ENCODE measurements at regions of chr10 and their contacts with region 1.

Region 1: GRCh38 chr10:96532496-96532895 is 18.8 kb upstream of the TLL2 start:
- DNase-seq: no peak
- ATAC-seq: no peak
- H3K4me3 ChIP-seq: no peak overlapping the region
- H3K27ac ChIP-seq: no peak overlapping the region
- H3K4me1 ChIP-seq: peaks cover 24% of the 10 kb centered on the region
- H3K27me3 ChIP-seq: no peaks in the 10 kb centered on the region
- CTCF ChIP-seq: no peak
- EP300 ChIP-seq: no peak
- POLR2A ChIP-seq: no peak
- RAD21 ChIP-seq: no peak

Region 2: GRCh38 chr10:96501985-96502384 is 30.5 kb before region 1 on chr10:
- CTCF ChIA-PET with region 1: no interaction called
- POLR2A ChIA-PET with region 1: no interaction called
- in situ Hi-C with region 1: no loop called
- intact Hi-C with region 1: loop called (anchors 1 kb)
- DNase-seq: peak; percentile 36
- ATAC-seq: peak; percentile 64
- H3K4me3 ChIP-seq: no peak overlapping the region
- H3K27ac ChIP-seq: no peak overlapping the region
- H3K4me1 ChIP-seq: peaks cover 37% of the 10 kb centered on the region
- H3K27me3 ChIP-seq: peaks cover 4 to 14% of the 10 kb centered on the region in 2 experiments; a peak in 2 of 5 replicates
- CTCF ChIP-seq: no peak
- EP300 ChIP-seq: no peak
- POLR2A ChIP-seq: no peak
- RAD21 ChIP-seq: no peak

Measured in HepG2 (cell line).